A673 (cell line): ENCODE measurements at regions of chr5 and their contacts with region 1.

Region 1: GRCh38 chr5:113606298-113607134 is 93.0 kb downstream of the YTHDC2 start:
- DNase-seq: peak; percentile 75
- H3K4me3 ChIP-seq: no peak overlapping the region
- H3K27ac ChIP-seq: no peak overlapping the region
- H3K4me1 ChIP-seq: no peaks in the 10 kb centered on the region
- H3K27me3 ChIP-seq: no peaks in the 10 kb centered on the region
- CTCF ChIP-seq: peak; percentile 80

Region 2: GRCh38 chr5:112174959-112175594 is 1431.4 kb before region 1 on chr5:
- CTCF ChIA-PET with region 1: no interaction called
- POLR2A ChIA-PET with region 1: no interaction called
- intact Hi-C with region 1: loop called (anchors 5 kb)
- DNase-seq: peak; percentile 63
- H3K4me3 ChIP-seq: no peak overlapping the region
- H3K27ac ChIP-seq: no peak overlapping the region
- H3K4me1 ChIP-seq: no peaks in the 10 kb centered on the region
- H3K27me3 ChIP-seq: no peaks in the 10 kb centered on the region
- CTCF ChIP-seq: peak; percentile 75

Region 3: DNA sequence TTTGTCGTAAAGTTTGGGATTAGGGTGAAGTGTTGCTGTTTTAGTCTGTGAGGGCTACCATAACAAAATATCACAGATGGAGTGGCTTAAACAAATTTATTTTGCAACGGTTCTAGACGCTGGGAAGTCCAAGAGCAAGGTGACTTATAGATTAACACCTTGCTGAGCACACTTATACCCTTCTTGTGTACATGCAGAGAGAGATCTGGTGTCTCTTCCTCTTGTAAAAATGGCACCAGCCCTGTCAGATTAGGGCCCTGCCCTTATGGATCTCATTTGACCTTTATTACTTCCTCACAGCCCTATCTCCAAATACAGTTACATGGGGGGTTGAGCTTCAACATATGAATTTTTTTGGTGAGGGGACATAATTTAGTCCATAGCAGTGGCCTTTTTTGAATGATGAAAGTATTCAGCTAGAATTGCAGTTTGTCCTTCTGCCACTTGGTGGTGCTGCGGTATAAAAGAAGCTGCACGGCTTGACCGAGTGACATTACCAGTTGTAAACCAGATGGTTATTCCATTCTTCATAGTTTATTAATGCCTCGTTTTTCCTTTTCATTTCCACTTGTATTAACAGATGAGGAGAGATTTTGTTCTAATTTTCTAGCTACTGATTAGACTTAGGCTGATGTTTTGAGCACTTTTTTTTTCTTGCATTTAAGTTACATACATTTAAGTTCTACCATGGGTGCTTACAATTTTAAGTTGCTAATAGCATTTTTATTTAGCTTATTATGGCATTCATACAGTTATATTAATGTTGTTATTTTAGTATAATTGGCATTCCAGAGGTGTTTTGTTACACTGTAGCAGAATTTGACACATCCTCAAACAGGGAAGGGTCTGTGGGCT is 610.5 kb before region 1 on chr5:
- CTCF ChIA-PET with region 1: no interaction called
- POLR2A ChIA-PET with region 1: no interaction called
- intact Hi-C with region 1: loop called (anchors 1 kb)
- DNase-seq: peak; percentile 75
- H3K4me3 ChIP-seq: no peak overlapping the region
- H3K27ac ChIP-seq: no peak overlapping the region
- H3K4me1 ChIP-seq: no peaks in the 10 kb centered on the region
- H3K27me3 ChIP-seq: no peaks in the 10 kb centered on the region
- CTCF ChIP-seq: peak; percentile 89

Region 4: DNA sequence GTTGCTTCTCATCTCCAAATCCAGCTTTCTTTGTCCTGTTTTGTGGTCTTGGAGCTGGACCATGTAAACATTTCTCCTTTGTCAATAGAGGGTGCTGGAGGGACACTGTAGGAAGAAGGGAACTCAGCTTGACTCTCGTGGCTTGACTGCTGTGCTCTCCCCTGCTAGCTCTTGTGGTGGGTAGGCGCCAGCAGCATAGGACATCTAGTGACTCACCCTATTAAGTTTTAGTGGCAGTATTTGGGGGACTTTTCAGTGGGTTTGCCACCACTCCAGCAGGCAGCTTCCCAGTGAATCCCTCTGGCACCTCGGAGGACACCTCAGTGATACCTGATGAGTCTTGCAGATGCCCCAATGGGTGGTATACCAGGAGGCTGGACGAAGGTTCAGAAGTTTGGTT is 269.5 kb before region 1 on chr5:
- CTCF ChIA-PET with region 1: no interaction called
- POLR2A ChIA-PET with region 1: no interaction called
- intact Hi-C with region 1: loop called (anchors 1 kb)
- DNase-seq: peak; percentile 69
- H3K4me3 ChIP-seq: no peak overlapping the region
- H3K27ac ChIP-seq: no peak overlapping the region
- H3K4me1 ChIP-seq: no peaks in the 10 kb centered on the region
- H3K27me3 ChIP-seq: no peaks in the 10 kb centered on the region
- CTCF ChIP-seq: peak; percentile 49

Region 5: DNA sequence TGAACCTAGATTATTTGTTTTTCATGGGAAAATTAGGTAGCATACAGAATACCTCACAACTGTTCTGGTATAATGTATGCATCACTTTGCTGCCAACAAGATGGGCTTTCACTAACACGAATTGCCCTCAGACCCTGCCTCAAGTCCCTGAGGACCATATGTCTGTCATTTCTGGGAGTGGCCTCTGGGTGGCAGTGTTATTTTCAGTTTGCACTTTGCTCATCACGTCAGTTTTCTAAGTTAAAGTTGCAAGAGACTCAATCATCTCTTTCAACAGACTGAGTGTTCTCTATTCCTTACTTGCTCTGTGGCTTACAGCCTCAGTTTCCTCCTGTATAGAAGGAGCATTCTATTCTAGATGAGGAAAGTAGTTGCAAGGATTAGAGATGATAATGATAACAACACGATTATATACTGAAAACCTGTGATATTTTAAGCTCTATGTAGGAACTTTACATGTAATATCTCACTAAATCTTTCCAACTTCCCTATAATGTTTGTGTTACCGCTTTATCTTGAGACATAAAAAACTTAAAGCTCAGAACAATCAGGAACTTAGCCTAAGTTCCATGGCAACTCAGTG is 227.5 kb before region 1 on chr5:
- CTCF ChIA-PET with region 1: no interaction called
- POLR2A ChIA-PET with region 1: no interaction called
- intact Hi-C with region 1: loop called (anchors 1 kb)
- DNase-seq: peak; percentile 68
- H3K4me3 ChIP-seq: no peak overlapping the region
- H3K27ac ChIP-seq: no peak overlapping the region
- H3K4me1 ChIP-seq: no peaks in the 10 kb centered on the region
- H3K27me3 ChIP-seq: no peaks in the 10 kb centered on the region
- CTCF ChIP-seq: peak; percentile 84